ENCODE measurements at regions of chr17 and their contacts with region 1.

Region 1: DNA sequence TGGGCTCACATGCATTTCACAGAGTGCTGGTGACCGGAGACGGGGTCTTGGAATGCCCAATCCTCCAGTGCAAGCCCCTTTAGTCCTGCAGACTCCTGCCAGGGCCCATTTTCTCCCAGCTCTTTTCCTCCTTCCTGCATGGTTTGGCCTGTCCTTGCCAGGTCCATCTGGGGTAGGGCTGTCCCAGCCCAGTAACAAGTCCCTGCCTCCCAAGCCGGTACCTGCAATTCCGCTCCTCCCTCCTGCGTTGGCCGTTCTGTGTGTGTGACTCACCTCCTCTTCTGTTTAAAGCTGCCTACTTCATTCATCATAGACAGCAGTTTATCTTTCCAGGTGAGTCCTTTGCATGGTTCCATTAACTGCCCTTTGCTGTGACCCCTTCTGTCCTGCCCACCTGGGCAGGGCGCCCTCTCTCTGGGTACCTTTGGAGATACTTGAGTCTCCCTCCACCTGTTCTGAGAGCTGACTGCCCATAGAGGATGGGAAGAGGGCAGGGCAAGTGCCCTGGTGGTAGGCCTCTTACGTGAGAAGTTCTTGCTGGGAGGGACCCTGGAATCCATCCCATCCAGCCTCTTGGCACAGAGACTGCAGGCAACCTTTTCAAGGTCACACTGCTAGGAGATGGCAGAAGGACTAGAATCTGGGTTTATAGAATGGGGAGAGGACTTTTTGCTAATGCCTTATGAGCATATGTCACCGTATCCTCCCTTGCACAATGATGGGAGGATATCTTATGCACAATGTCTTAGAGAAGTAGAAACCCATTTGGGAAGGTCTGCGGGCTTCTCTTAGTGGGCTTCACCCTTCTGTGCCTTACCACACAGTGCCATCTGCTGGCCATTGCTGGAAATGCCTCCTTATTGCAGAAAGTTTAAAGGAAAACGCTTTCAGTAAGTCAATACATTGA is 29.7 kb upstream of the LGALS9 start:
- DNase-seq: peak; percentile 83 to 91 (median 86)
- ATAC-seq: peak; percentile 62
- H3K4me3 ChIP-seq: no peak overlapping the region
- H3K27ac ChIP-seq: peak overlapping the region in 3 of 4 donors; percentile 12 to 42 (median 17)
- H3K4me1 ChIP-seq: peaks cover 21% of the 10 kb centered on the region
- H3K27me3 ChIP-seq: no peaks in the 10 kb centered on the region
- CTCF ChIP-seq: peak; percentile 86 to 94 (median 92)
- POLR2A ChIP-seq: no peak

Region 2: DNA sequence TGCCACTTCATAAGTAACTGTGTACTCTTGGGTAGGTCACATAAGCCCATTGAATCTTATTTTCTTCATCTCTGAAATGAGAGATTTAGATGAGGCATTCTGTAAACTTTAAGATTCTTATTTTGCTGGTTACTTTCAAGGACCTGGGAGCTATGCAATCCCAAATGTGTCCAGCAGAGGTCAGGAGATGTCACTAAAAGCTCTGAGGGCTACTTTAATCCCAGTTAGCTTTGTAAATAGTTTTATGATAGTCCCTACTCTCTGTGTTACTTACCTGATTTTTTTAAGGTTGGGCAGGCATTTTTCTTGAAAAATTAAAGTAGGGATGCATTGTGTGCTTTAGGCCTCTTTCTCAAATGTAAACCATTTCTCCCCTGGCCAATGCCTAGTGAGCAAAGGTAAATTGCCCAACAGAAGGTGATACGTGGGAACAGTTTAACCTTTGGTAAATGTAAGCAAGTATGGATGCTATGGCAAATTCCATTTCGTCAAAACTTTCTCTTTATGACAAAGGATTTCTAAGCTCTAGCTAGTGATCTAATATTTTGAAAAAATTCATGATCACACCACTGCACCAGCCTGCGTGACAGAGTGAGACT is 364.5 kb before region 1 on chr17:
- intact Hi-C with region 1: loop called (anchors 10 kb)
- DNase-seq: peak; percentile 84 to 91 (median 88)
- ATAC-seq: peak; percentile 89
- H3K4me3 ChIP-seq: no peak overlapping the region
- H3K27ac ChIP-seq: no peak overlapping the region
- H3K4me1 ChIP-seq: peaks cover 12% of the 10 kb centered on the region
- H3K27me3 ChIP-seq: no peaks in the 10 kb centered on the region
- CTCF ChIP-seq: peak; percentile 72 to 97 (median 91)
- POLR2A ChIP-seq: no peak

Region 3: GRCh38 chr17:27654654-27655524 is 53.6 kb after region 1 on chr17:
- intact Hi-C with region 1: loop called (anchors 10 kb)
- DNase-seq: peak; percentile 70 to 76 (median 73)
- ATAC-seq: peak; percentile 58
- H3K4me3 ChIP-seq: no peak overlapping the region
- H3K27ac ChIP-seq: no peak overlapping the region
- H3K4me1 ChIP-seq: no peaks in the 10 kb centered on the region
- H3K27me3 ChIP-seq: no peaks in the 10 kb centered on the region
- CTCF ChIP-seq: peak; percentile 71 to 96 (median 87)
- POLR2A ChIP-seq: no peak

Region 4: DNA sequence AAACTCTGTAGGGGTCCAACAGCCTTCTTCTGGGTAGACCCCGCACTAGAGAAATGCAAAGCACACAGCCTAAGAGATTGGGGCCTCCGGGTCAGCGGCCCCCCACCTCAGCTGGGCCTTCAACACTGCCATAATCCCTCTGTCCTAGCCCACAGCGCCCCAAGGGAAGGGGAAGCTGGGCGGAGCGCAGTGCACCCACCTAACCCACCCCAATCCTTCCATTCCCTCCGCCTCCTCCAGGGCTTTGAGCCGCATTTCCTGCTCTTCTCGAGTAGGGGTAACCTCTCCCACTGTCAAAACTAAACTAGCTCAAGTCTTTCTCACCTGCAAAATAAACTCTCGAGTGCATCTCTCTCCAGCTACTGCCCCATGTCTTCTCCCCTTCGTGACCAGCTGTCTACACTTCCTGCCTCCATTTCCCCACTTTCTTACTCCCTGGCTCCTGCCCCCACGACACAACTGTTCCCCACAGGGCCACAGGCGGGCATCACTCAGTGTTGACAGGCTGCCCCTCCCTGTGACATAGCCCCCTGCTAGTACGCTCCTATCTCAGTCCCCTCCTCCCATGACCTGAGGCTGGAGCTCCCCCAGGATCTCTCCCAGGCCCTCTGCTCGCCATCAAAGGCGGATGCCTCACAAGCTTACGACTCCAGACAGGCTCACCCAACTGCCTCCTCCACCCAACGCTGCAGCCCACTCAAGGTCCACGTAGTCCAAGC is 716.3 kb after region 1 on chr17:
- intact Hi-C with region 1: no loop called
- DNase-seq: no peak
- ATAC-seq: no peak
- H3K4me3 ChIP-seq: no peak overlapping the region
- H3K27ac ChIP-seq: peak overlapping the region; percentile 25 to 95 (median 89)
- H3K4me1 ChIP-seq: peaks cover 68% of the 10 kb centered on the region
- H3K27me3 ChIP-seq: no peaks in the 10 kb centered on the region
- CTCF ChIP-seq: no peak
- POLR2A ChIP-seq: no peak